CD8-positive, alpha-beta T cell (primary cell): ENCODE measurements at regions of chr12 and their contacts with region 1.

Region 1: DNA sequence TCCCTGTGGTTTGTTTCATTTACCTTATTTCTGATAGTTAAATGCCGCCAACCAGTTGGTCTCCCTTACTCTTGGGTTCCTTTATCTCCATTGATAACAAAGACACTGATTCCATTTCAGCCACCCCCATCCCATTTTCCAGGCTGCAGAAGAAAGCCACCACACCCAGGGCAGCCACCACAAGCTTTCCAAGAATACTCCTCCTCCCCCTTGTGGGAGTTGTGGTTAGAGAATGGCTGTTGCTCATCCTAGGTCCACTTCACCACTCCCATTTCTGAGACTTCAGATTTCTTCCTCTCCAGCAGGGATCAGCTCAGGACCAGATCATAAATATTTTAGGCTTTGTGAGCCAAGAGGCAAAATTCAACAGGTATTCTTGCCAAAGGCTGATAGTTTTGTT is 73.9 kb downstream of the ANO4 start:
- DNase-seq: no peak
- ATAC-seq: no peak
- H3K4me3 ChIP-seq: no peak overlapping the region
- H3K4me3 Mint-ChIP-seq: no peak overlapping the region
- H3K27ac ChIP-seq: no peak overlapping the region
- H3K27ac Mint-ChIP-seq: no peak overlapping the region
- H3K4me1 ChIP-seq: no peaks in the 10 kb centered on the region
- H3K4me1 Mint-ChIP-seq: no peaks in the 10 kb centered on the region
- H3K27me3 ChIP-seq: no peaks in the 10 kb centered on the region
- H3K27me3 Mint-ChIP-seq: no peaks in the 10 kb centered on the region
- CTCF ChIP-seq: no peak

Region 2: DNA sequence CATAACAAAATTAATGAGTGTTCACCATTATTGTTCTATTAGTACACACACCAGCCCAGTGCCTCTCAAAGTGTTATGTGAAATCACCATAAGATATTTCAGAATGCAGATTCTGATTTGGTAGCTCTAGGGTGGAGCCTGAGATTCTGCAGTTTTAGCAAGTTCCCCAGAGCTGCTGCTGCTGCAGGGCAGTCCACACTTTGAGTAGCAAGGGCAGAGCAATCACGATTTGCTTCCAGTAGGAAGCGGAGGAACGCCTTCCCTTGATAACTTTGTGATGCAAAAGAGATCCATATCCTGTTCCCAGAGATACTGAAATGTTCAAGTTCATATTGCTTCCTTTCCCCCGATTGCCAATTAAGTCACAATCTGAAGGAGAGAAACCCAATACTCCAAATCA is 453.7 kb before region 1 on chr12:
- CTCF ChIA-PET with region 1: no interaction called
- POLR2A ChIA-PET with region 1: no interaction called
- intact Hi-C with region 1: no loop called
- DNase-seq: no peak
- ATAC-seq: no peak
- H3K4me3 ChIP-seq: no peak overlapping the region
- H3K4me3 Mint-ChIP-seq: no peak overlapping the region
- H3K27ac ChIP-seq: no peak overlapping the region
- H3K27ac Mint-ChIP-seq: no peak overlapping the region
- H3K4me1 ChIP-seq: no peaks in the 10 kb centered on the region
- H3K4me1 Mint-ChIP-seq: no peaks in the 10 kb centered on the region
- H3K27me3 ChIP-seq: no peaks in the 10 kb centered on the region
- H3K27me3 Mint-ChIP-seq: peaks cover 14% of the 10 kb centered on the region
- CTCF ChIP-seq: no peak

Region 3: GRCh38 chr12:100799770-100800169 is 68.7 kb before region 1 on chr12:
- CTCF ChIA-PET with region 1: no interaction called
- POLR2A ChIA-PET with region 1: no interaction called
- intact Hi-C with region 1: loop called in 1 of 2 experiments (anchors 2 kb)
- DNase-seq: no peak
- ATAC-seq: no peak
- H3K4me3 ChIP-seq: no peak overlapping the region
- H3K4me3 Mint-ChIP-seq: no peak overlapping the region
- H3K27ac ChIP-seq: no peak overlapping the region
- H3K27ac Mint-ChIP-seq: no peak overlapping the region
- H3K4me1 ChIP-seq: no peaks in the 10 kb centered on the region
- H3K4me1 Mint-ChIP-seq: no peaks in the 10 kb centered on the region
- H3K27me3 ChIP-seq: no peaks in the 10 kb centered on the region
- H3K27me3 Mint-ChIP-seq: peaks cover 6% of the 10 kb centered on the region
- CTCF ChIP-seq: no peak

Region 4: DNA sequence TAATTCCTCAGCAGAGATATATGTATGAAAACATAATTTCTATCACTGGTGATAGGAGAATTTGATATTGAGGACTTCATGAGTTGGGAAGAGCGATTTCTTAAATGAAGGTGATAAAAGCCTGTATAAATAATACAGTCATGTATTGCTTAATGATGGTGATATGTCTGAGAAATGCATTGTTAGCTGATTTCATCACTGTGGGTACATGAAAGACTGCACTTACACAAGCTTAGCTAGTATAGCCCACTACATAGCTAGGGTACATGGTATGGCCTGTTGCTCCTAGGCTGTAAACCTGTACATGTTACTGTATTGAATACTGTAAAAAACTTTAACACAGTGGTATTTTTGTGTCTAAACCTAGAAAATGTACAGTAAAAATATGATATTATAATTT is 10.5 kb before region 1 on chr12:
- CTCF ChIA-PET with region 1: no interaction called
- POLR2A ChIA-PET with region 1: no interaction called
- intact Hi-C with region 1: no loop called
- DNase-seq: no peak
- ATAC-seq: no peak
- H3K4me3 ChIP-seq: no peak overlapping the region
- H3K4me3 Mint-ChIP-seq: no peak overlapping the region
- H3K27ac ChIP-seq: no peak overlapping the region
- H3K27ac Mint-ChIP-seq: no peak overlapping the region
- H3K4me1 ChIP-seq: no peaks in the 10 kb centered on the region
- H3K4me1 Mint-ChIP-seq: no peaks in the 10 kb centered on the region
- H3K27me3 ChIP-seq: no peaks in the 10 kb centered on the region
- H3K27me3 Mint-ChIP-seq: no peaks in the 10 kb centered on the region
- CTCF ChIP-seq: no peak